Right ventricle myocardium inferior (tissue), 1 donor: ENCODE measurements at regions of chr11 and their contacts with region 1.

Region 1: GRCh38 chr11:134050541-134051383 is 18.1 kb upstream of the JAM3 start:
- DNase-seq: peak; percentile 88
- ATAC-seq: peak; percentile 80

Region 2: DNA sequence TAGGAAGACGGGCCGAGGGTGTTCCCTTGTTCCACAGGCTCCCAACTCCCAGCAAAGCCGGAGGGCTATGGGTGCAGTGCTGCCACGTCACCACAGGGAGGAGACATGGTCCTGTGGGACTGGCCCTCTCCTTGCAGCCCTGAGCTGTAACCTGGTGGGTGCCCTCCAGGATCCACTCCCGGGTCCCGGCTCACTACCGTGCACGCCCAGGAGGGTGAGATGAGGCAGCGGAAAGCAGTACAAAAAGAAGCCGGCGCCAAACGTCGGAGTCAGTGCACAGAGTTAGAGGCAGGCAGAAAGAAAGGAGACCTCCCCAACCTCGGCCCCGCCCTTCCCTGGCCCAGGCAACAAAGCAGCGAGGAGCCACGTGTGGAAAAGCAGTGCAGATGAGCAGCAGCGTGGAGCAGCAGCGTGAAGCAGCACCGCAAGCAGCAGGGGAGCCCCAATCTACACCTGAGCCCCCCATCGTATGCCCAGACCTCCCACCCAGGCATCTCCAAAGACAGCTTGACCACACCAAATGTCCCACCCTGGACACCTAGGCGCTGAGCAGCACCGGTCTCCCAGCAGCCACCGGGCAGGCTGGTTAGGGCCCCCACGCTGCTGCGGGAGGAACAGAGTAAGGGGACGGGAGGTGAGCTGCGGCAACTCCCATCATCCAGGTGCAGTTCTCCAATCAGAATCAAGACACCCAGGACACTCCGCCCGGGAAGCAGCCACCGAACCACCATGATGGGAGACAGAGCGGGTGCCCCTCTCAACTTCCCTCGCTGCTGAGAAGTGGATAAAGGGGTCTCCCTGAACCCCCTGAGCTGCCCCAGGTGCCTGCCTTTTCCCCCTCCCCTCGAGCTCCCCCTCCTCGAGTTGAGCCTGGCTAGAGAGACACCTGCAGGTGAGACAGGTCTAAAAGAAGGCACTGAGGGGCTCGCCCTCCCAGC is 122.8 kb before region 1 on chr11:
- intact Hi-C with region 1: loop called (anchors 2 kb)
- DNase-seq: peak; percentile 72
- ATAC-seq: peak; percentile 60

Region 3: DNA sequence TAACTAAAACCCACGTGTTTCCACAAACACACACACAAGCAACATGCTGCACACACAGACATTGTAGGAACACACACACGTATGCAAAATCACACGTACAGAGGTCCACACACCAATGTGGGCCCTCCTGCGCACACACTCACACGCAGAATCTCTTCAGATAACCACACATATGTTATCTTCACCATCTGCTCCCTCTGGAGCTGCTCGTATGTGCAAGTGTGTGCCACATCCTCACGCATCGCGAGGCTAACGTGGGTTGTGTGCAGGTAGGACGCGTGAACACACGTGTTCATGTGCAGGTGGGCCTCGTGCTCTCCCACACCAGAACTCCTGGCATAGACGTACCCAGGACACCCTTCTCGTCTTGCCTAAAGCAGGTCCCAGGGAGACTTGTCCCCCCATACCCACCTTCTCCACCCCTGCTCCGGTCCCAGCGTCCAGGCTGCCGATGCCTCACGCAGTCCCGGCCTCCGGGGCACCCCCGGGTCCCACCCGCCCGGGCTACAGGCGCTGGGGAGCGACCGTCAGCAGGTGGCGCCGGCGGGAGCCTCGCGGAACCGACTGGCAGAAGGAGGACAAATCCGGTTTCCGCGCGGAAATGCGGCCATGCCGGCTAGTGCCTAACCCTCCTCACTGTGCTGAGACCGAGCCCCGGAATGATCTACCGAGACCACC is 83.7 kb before region 1 on chr11:
- intact Hi-C with region 1: loop called (anchors 2 kb)
- DNase-seq: peak; percentile 81
- ATAC-seq: peak; percentile 71

Region 4: DNA sequence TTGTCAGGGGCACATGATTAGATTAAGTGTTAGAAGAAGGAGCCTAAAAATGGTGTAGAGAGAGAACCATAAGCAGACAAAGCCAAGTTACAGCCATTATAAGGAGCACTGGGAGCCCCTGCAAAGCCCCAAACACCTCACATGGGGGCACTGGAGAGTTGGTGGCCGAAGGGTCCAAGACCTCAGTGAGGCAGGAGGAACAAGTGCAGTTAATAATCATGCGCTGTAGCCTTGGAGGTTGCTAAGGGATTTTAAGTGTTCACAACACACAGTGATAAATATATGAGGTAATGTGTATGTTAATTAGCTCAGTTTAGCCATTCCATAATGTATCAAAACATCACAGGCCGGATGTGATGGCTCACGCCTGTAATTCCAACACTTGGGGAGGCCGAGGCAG is 36.3 kb before region 1 on chr11:
- intact Hi-C with region 1: loop called (anchors 1 kb)
- DNase-seq: no peak
- ATAC-seq: peak; percentile 76

Region 5: DNA sequence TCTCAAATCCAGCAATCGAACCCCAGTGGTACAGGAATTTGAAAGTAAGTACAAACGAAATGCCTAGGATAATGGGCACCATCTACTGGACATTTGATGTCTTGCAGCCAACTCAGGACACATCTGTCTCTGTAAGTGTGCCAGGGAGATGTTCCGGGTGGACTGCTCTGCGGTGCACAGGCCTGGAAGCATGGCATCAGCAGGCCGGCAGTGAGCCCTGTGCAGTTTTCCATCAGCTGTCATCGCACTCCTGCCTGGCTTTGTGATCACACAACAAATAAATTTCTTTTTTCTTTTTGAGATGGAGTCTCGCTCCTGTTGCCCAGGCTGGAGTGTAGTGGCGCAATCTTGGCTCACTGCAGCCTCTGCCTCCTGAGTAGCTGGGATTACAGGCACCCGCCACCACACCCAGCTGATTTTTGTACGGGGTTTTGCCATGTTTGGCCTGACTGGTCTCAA is 89.1 kb after region 1 on chr11:
- intact Hi-C with region 1: loop called (anchors 1 kb)
- DNase-seq: no peak
- ATAC-seq: peak; percentile 87

Region 6: GRCh38 chr11:134181707-134182106 is 130.9 kb after region 1 on chr11:
- intact Hi-C with region 1: no loop called
- DNase-seq: no peak
- ATAC-seq: no peak

Region 7: DNA sequence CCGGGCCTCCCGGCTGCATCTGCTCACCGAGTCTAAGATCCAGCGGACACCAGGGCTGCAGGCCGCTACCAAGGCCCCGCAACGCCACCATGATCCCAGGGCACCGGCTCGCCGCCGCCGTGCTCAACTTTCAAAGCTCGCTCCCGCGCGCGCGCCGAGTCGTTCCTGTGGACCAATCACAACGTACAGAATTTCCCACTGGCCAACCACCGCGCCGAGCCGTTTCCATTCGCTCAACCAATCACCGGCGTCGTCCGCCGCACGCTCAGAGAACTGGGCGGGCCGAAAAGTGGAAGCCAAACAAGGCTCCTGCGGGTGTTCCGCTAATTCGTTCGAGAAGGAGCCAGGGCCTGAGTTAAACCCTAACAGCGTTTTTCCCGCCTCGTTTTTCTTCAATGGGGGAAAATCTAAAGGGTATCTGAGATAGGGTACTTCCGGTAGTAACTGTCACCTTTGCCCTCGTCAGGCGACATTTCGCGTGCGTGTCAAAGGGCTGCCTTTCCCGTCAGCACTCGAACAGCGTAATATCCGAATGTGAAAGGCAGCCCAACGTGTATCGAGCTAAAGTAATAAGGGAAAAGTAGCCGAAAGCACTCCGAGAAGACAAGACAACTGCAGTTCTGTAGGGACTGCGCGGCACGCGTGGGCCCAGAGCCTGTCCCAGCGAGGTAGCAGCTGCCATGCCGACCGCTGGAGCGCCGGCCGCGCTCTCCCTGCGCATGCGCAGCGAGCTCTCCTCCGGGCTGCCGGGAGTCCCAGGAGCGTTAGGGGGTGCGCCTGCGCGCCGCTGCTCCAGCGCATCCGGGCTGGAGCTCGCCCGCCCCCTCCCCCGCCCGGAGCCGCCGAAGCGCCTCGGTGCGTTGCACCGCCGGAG is 173.3 kb after region 1 on chr11 and contains the starts of genes NCAPD3 and VPS26B:
- intact Hi-C with region 1: loop called (anchors 10 kb)
- DNase-seq: peak; percentile 99
- ATAC-seq: peak; percentile 95
- total RNA-seq, gene NCAPD3: 12.3 TPM
- total RNA-seq, gene VPS26B: 39.5 TPM